Brain microvascular endothelial cell (primary cell): ENCODE measurements at regions of chr17 and their contacts with region 1.

Region 1: GRCh38 chr17:44636562-44636961 is 19.7 kb upstream of the MEIOC start:
- DNase-seq: peak; percentile 11
- H3K4me3 ChIP-seq: no peak overlapping the region
- H3K27ac ChIP-seq: no peak overlapping the region
- H3K27me3 ChIP-seq: no peaks in the 10 kb centered on the region
- CTCF ChIP-seq: peak; percentile 26

Region 2: GRCh38 chr17:44533533-44534246 is 102.9 kb before region 1 on chr17:
- in situ Hi-C with region 1: loop called (anchors 25 kb)
- DNase-seq: peak; percentile 80
- H3K4me3 ChIP-seq: peak overlapping the region; percentile 15
- H3K27ac ChIP-seq: peak overlapping the region; percentile 6
- H3K27me3 ChIP-seq: no peaks in the 10 kb centered on the region
- CTCF ChIP-seq: peak; percentile 98